Dendritic cell treated with granulocyte-macrophage colony-stimulating factor and Interleukin-4, amounts not matched to agents 40 ng/mL and 50 ng/mL, for 4 days (primary cell): ENCODE measurements at regions of chr17 and their contacts with region 1.

Region 1: GRCh38 chr17:60435244-60436167 is 13.2 kb downstream of the CHCT1 start:
- H3K4me3 Mint-ChIP-seq: no peak overlapping the region
- H3K27ac Mint-ChIP-seq: peak overlapping the region; percentile 32
- H3K4me1 Mint-ChIP-seq: peaks cover 26% of the 10 kb centered on the region
- H3K27me3 Mint-ChIP-seq: peaks cover 4% of the 10 kb centered on the region

Region 2: DNA sequence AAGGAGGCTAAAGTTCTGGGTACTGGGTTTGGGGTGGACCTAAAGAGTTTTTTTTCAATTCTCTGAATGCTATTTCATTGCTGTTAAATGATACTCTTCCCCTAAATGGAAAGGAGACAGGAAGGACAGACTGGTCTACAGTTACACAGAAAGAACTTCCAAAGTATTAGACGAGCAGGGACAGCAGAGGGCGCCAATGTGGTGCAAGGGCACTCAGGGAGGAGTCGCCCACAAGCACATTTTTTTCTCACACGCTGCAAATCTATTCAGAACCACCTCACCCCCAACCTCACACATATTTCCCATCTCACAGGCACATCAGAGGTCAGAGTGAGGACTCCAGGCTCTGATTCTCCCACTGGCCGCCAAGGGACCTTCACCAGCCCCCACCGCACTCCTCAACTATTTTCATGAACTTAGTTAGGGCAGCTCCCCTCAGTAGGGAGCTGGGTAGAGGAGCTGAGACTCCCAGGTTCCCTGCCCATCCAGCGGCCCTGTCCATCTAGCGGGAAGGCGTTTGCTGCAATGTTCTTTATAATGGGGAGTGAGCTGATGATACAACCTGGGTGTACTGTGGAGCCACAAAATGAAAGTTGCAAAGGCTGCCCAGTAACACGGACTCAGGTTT is 292.5 kb before region 1 on chr17:
- intact Hi-C with region 1: loop called (anchors 10 kb)
- H3K4me3 Mint-ChIP-seq: no peak overlapping the region
- H3K27ac Mint-ChIP-seq: no peak overlapping the region
- H3K4me1 Mint-ChIP-seq: peaks cover 53% of the 10 kb centered on the region
- H3K27me3 Mint-ChIP-seq: peaks cover 95% of the 10 kb centered on the region